ENCODE measurements at regions of chr3 and their contacts with region 1.

Region 1: GRCh38 chr3:181358555-181358954 is 353.2 kb upstream of the SOX2 start:
- DNase-seq: no peak

Region 2: DNA sequence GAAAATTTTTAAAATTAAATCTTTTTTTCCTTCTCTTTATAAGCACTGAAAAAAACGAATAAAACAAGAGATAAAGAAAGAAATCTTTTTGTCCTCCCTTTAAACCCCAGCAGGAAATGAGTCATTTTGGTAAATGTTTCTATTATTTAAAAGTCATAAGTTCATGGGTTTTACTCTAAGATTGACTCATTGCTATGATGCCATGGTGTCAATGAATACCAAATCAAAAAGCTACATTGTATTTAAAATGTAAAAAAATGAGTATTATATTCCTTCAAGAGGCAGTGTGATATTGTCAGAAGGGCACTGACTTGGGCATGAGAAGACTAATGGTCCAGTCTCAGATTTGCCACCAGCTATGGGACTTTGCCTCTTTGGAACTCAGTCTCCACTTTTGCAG is 65.6 kb before region 1 on chr3:
- intact Hi-C with region 1: loop called in 1 of 2 experiments (anchors 10 kb)
- DNase-seq: no peak

Region 3: GRCh38 chr3:181609030-181609767 is 250.6 kb after region 1 on chr3:
- intact Hi-C with region 1: no loop called
- DNase-seq: no peak

Measured in posterior vena cava (tissue), 2 donors.